ENCODE measurements at regions of chr14 and their contacts with region 1.

Region 1: DNA sequence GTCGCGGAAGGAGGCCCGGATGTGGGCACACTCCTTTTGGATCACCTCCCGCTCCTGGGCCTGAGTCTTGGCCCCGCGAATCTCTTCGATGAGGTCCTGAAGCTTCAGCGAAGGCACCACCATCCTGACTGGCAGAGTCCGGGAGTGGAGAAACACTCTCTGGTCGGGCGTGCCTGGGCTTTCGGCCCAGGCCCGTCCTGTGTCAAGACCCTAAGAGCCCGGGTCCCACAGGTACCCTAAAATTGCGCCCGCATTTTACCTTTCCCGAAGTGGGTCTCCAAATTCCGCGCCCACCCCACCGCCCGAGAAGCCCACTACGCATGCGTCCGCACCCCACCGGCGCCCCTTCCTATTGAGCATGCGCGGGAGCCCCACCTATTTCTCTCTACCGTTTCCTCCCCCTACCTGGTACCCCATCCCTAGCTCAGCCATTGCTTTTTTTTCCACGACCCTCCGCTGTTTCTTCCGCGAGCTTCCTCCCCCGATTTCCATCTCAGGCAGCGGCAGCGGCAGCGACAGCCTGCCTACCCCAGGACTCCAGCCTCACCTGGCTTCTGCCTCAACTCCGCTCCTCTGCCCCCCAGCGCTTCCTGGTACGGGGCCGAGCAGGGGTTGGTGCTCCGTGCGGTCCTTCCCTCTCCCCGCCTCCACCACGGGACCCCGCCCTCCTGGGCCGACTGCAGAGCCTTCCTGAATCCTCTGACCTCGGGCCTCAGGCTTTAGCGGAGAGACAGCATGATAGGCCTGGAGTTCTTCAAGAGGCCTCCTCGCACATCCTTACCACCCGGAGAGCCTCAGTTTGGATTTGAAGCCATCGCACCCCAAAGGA is at the start of gene AP1G2:
- DNase-seq: peak; percentile 73 to 94 (median 81)
- ATAC-seq: peak; percentile 96
- H3K4me3 Mint-ChIP-seq: peak within 1 kb of the TSS; percentile 97 to 100 (median 100)
- H3K27ac Mint-ChIP-seq: peak within 1 kb of the TSS; percentile 82 to 100 (median 98)
- H3K4me1 Mint-ChIP-seq: peaks cover 24 to 45% (median 44%) of the 10 kb centered on the region in 4 donors
- H3K27me3 Mint-ChIP-seq: peaks cover 0 to 9% (median 3%) of the 10 kb centered on the region in 5 donors
- polyA plus RNA-seq, gene AP1G2: 67.8 to 91.4 (median 68.4) TPM

Region 2: GRCh38 chr14:23555882-23556699 is 11.3 kb before region 1 on chr14 and contains the start of gene THTPA:
- POLR2A ChIA-PET with region 1: interaction called, 30 read pairs
- DNase-seq: peak; percentile 85 to 97 (median 92)
- ATAC-seq: peak; percentile 88 to 91
- H3K4me3 Mint-ChIP-seq: peak within 1 kb of the TSS; percentile 88 to 99 (median 96)
- H3K27ac Mint-ChIP-seq: peak within 1 kb of the TSS; percentile 89 to 98 (median 95)
- H3K4me1 Mint-ChIP-seq: peaks cover 14 to 64% (median 34%) of the 10 kb centered on the region in 4 donors
- H3K27me3 Mint-ChIP-seq: no peaks in the 10 kb centered on the region
- polyA plus RNA-seq, gene THTPA: 14.9 to 15.6 (median 14.9) TPM

Measured in naive thymus-derived CD8-positive, alpha-beta T cell (primary cell).